AG04449 (cell line): ENCODE measurements at regions of chr20 and their contacts with region 1.

Region 1: GRCh38 chr20:47272893-47273590 is 83.5 kb downstream of the ZMYND8 start:
- DNase-seq: no peak
- H3K4me3 ChIP-seq: no peak overlapping the region
- CTCF ChIP-seq: peak; percentile 78

Region 2: GRCh38 chr20:47196091-47197081 is 76.7 kb before region 1 on chr20:
- CTCF ChIA-PET with region 1: interaction called, 38 read pairs
- POLR2A ChIA-PET with region 1: interaction called, 3 read pairs
- DNase-seq: no peak
- H3K4me3 ChIP-seq: no peak overlapping the region
- CTCF ChIP-seq: peak; percentile 88

Region 3: DNA sequence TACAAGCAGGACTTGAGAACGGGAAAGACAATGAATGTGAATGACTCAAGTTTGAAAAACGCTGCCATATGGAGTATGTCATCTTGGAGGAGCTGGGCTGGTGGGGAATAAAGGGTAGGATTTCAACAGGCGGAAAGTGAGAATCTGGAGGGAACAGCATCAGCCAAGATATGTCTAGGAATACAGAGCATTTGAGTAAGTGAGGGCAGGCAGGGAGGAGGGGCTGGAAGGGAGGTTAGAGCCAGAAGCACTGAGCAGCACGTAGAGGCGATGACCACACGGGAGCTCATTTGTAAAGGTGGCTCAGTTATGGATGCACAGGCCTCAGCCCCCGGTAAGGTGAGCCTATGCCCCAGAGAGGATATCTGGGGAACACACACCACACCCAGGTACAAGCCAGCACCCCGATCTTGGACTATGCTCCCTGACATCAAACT is 31.7 kb before region 1 on chr20:
- CTCF ChIA-PET with region 1: interaction called, 13 read pairs
- POLR2A ChIA-PET with region 1: no interaction called
- DNase-seq: no peak
- H3K4me3 ChIP-seq: no peak overlapping the region
- CTCF ChIP-seq: no peak

Region 4: DNA sequence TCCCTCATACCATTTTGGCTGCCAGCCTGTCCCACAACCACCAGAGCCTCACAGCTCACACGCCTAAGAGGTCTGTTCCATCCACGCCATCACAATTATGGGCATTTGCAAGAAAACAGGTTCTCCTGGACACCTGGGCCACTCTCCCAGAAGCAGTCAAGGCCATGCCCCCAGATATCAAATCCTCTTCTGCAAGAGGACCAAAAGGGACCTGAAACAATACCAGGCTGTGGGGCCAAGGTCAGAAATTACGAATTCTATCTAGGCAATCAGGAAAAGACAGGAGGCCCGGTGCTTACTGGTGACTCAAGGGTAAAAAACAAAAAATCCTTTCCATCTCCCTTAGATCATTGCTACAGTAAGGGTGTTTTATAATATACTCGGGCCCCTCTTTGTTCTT is 13.6 kb after region 1 on chr20:
- CTCF ChIA-PET with region 1: interaction called, 19 read pairs
- POLR2A ChIA-PET with region 1: interaction called, 4 read pairs
- DNase-seq: no peak
- H3K4me3 ChIP-seq: no peak overlapping the region
- CTCF ChIP-seq: no peak

Region 5: DNA sequence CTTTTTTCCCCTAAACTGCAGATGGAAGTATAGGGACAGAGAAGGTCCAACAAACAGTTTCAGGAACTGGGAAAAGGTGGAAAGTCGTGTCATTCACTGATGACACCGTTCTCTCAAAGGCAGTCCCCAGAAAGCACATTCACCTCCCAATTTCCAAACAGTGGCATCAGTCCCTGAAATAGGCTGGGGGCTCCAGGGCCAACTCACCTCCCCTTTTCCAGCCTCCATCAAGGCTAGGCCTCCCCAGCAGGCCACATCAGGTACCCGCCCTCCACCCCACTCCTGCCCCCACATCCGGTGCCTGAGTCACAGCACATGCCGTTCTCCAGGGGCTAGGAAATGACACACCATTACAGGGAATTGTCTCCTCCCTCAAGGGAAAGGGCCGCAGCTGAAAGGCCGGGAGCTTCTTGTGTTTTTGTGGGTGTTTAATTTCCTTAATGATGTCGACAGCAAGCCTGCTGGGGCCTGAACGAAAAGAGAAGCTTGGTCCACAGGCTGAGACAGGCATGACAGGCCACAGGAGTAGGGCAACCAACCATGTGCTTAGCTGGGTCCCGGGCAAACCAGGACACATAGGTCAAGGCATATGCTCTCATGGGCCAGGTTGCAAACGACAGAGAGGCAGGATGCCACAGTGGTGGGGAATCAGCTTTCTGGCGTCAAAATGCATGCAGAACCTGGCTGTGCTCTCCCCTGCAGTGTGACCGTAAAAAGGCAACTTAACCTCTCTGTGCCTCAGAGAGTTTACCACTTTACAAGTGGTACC is 44.3 kb after region 1 on chr20:
- CTCF ChIA-PET with region 1: interaction called, 20 read pairs
- POLR2A ChIA-PET with region 1: interaction called, 6 read pairs
- DNase-seq: peak; percentile 90
- H3K4me3 ChIP-seq: no peak overlapping the region
- CTCF ChIP-seq: no peak

Region 6: DNA sequence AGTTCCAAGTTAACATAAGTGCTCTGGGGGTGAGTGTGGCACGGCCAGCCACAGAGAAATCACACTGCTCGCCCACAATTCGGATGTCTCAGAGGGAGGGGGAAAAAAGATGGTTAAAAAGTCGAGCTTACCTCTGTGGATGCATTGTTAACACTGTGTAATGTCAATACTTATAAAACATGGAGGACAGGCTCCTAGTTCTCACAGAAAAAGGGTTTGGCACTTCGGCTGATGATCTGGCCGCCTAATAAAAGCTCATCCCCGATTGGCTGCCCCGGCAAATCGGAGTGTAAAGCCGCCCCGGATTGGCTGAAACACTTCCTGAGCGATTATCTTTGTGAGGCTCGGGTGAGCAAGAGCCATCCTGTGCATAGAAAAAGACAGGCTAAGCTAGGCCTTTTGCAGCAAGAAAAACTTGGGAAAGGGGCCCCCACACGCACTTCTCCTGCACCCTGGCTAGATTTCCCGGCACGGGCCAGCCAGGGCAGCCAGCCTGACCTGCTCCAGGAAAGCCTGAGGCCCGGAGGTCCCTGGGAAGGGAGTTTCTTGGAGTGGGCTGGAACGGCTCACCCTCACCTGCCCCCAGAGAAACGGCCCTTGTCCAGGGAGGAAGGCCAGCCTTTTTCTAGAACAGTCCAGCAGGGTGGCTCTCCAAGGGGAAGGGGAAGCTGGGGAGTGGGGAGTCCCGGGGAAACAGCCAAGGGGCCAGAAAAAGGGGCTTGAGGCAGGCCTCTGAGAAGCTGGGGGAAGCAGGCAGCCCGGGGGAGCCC is 83.7 kb after region 1 on chr20 and contains the start of gene ZMYND8:
- CTCF ChIA-PET with region 1: interaction called, 112 read pairs
- POLR2A ChIA-PET with region 1: interaction called, 32 read pairs
- DNase-seq: no peak
- H3K4me3 ChIP-seq: peak within 1 kb of the TSS; percentile 52
- CTCF ChIP-seq: no peak

Region 7: GRCh38 chr20:47501483-47502270 is 228.6 kb after region 1 on chr20 and contains the start of gene NCOA3:
- CTCF ChIA-PET with region 1: interaction called, 11 read pairs
- POLR2A ChIA-PET with region 1: interaction called, 7 read pairs
- DNase-seq: peak; percentile 64
- H3K4me3 ChIP-seq: peak within 1 kb of the TSS; percentile 82
- CTCF ChIP-seq: peak; percentile 68